ENCODE measurements at regions of chr1 and their contacts with region 1.

Region 1: DNA sequence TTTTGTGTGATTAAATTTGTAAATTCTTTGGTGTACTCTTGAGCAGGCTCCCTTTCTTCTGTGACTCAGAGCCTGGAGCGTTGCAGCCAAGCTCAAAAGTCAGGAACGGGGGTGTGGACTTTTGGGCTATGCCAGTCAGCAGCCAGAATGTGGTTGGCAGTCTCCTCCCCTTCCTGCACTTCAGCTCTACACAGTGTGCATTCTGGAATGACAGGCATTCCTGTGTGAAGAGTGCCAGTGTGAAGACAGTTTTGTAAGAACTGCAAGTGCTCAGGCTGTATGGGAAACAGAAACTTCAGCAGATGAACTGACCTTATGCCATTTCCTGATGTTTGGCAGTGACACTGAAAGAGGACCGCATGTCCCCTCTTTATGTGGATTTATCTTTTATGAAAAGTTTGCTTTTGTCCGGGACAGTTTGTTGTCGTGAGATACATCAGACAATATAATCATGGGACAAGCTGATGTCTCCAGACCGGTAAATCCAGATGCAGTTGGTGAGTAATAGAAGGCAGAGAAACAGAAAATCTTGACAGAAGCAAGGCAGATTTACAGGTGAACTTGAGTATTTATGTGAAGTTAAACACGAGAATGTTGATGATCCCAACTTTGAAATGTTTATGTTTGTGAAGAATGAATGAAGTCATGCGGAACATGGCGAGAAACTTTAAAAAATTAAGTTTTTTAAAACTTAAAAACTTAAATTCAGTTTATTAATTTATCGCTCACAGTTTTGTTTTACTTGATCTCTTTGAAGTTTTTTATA is 67.7 kb upstream of the RCC1 start:
- DNase-seq: peak; percentile 98
- H3K4me3 Mint-ChIP-seq: peak overlapping the region; percentile 89
- H3K27ac Mint-ChIP-seq: peak overlapping the region; percentile 93
- H3K4me1 Mint-ChIP-seq: peaks cover 21% of the 10 kb centered on the region
- H3K27me3 Mint-ChIP-seq: no peaks in the 10 kb centered on the region
- CTCF ChIP-seq: no peak

Region 2: GRCh38 chr1:28428012-28428411 is 10.1 kb before region 1 on chr1:
- CTCF ChIA-PET with region 1: interaction called, 6 read pairs
- POLR2A ChIA-PET with region 1: interaction called, 49 read pairs
- intact Hi-C with region 1: no loop called
- DNase-seq: no peak
- H3K4me3 Mint-ChIP-seq: no peak overlapping the region
- H3K27ac Mint-ChIP-seq: no peak overlapping the region
- H3K4me1 Mint-ChIP-seq: peaks cover 5% of the 10 kb centered on the region
- H3K27me3 Mint-ChIP-seq: no peaks in the 10 kb centered on the region
- CTCF ChIP-seq: no peak

Region 3: DNA sequence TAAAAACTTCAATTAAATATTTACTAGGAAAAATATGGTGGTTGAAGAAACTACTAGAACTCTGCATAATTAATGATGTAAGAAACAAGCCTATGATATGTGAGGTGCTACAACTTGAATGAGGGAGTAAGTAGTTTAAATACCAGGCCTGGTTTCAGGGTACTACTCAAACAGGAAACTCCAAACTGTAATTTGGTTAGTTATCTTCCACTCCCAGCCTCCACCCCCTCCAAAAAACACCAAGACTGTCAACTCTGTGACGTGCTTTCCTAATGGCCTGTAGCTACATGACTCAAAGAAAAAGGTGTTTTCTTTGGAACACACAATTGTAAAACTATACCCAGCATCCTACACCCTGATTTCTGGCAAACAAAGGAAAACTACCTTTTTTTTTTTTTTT is 11.8 kb after region 1 on chr1:
- CTCF ChIA-PET with region 1: interaction called, 3 read pairs
- POLR2A ChIA-PET with region 1: interaction called, 58 read pairs
- intact Hi-C with region 1: no loop called
- DNase-seq: peak; percentile 94
- H3K4me3 Mint-ChIP-seq: peak overlapping the region; percentile 40
- H3K27ac Mint-ChIP-seq: peak overlapping the region; percentile 79
- H3K4me1 Mint-ChIP-seq: peaks cover 13% of the 10 kb centered on the region
- H3K27me3 Mint-ChIP-seq: no peaks in the 10 kb centered on the region
- CTCF ChIP-seq: no peak

Measured in MCF 10A (cell line).